ENCODE measurements at regions of chr17 and their contacts with region 1.

Region 1: GRCh38 chr17:72021417-72022041 is 99.3 kb upstream of the SOX9 start:
- DNase-seq: no peak
- H3K4me3 ChIP-seq: no peak overlapping the region
- CTCF ChIP-seq: no peak

Region 2: DNA sequence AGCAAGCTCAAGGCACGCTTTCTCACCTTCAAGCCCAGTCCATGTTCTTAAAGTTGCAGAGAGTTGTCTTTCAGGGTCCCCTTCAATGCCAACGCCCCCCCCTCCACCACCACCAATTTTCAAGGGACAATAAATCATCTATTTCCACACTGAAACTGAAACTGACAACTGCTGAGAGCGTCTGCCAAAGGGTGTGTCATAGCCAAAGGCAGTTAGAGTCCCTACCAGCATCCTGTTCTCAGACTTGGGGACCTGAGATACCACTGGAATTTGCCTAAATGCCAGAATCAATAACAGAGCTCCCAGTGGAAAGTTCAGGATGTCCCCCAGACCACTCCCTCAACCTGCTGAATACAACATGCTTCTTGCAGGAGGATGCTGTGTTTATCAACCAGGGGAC is 33.9 kb before region 1 on chr17:
- in situ Hi-C with region 1: loop called (anchors 5 kb)
- DNase-seq: no peak
- H3K4me3 ChIP-seq: no peak overlapping the region
- CTCF ChIP-seq: no peak

Region 3: DNA sequence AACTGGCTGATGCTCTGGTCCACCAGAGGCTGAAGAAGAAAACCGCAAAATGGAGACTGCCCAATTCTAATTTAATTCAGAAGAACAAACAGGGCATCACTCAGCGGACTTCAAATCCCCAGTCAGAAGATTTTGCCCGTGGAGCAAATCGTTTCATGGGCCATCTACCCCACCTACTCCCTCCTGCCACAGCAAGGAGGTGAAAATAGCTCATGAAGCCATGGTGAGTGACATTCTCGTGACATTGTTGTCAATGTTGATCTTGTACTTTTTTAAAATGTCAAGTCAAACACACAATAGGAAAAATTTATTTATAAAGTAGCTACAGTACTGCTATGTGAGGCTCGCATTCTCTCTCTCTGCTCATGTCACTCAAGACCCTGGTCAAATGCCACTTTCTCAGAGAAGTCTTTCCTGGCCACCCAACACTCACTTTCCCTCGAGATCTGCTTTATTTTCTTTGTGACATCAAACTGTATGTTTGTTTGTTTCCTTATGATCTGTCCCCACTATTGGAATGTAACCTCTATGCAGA is 68.0 kb after region 1 on chr17:
- in situ Hi-C with region 1: loop called (anchors 5 kb)
- DNase-seq: no peak
- H3K4me3 ChIP-seq: no peak overlapping the region
- CTCF ChIP-seq: no peak